Mammary epithelial cell (primary cell): ENCODE measurements at regions of chr10 and their contacts with region 1.

Region 1: GRCh38 chr10:9709849-9710248 is 1307.8 kb upstream of the CELF2 start:
- DNase-seq: no peak
- H3K4me3 ChIP-seq: no peak overlapping the region
- H3K27ac ChIP-seq: no peak overlapping the region
- H3K4me1 ChIP-seq: no peaks in the 10 kb centered on the region
- H3K27me3 ChIP-seq: no peaks in the 10 kb centered on the region
- CTCF ChIP-seq: no peak

Region 2: GRCh38 chr10:7945469-7946192 is 1764.2 kb before region 1 on chr10:
- CTCF ChIA-PET with region 1: interaction called, 12 read pairs
- dilution Hi-C with region 1: no loop called
- in situ Hi-C with region 1: no loop called
- intact Hi-C with region 1: no loop called
- DNase-seq: peak; percentile 39
- H3K4me3 ChIP-seq: no peak overlapping the region
- H3K27ac ChIP-seq: peak overlapping the region; percentile 16
- H3K4me1 ChIP-seq: peaks cover 27% of the 10 kb centered on the region
- H3K27me3 ChIP-seq: no peaks in the 10 kb centered on the region
- CTCF ChIP-seq: no peak

Region 3: DNA sequence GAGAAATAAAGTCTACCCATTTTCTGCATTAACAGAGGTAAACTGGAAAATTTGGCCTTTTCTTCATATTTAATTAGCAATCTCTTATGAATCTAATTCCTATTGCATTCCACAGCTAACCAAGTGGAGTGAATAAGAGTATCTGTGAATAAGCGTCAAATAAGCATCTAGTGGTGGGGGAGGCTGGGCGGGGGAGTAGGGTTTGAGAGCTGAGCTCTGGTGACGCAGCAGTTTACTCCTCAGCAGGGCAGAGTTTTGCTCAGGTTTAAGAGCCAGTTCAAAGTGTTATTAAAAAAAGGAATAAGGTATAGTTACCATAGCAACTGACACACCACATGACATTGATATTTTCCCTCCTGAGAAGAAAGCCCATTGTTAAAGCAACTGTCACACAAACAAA is 38.9 kb before region 1 on chr10:
- CTCF ChIA-PET with region 1: no interaction called
- dilution Hi-C with region 1: loop called (anchors 5 kb)
- in situ Hi-C with region 1: no loop called
- intact Hi-C with region 1: no loop called
- DNase-seq: no peak
- H3K4me3 ChIP-seq: no peak overlapping the region
- H3K27ac ChIP-seq: no peak overlapping the region
- H3K4me1 ChIP-seq: no peaks in the 10 kb centered on the region
- H3K27me3 ChIP-seq: no peaks in the 10 kb centered on the region
- CTCF ChIP-seq: no peak